Aorta (tissue), 5 donors: ENCODE measurements at regions of chr19 and their contacts with region 1.

Region 1: GRCh38 chr19:36850559-36851442 is at the start of gene ZNF345:
- DNase-seq: peak; percentile 94
- ATAC-seq: peak; percentile 98
- H3K4me3 ChIP-seq: peak within 1 kb of the TSS; percentile 79 to 84
- H3K27ac ChIP-seq: peak within 1 kb of the TSS; percentile 8 to 73
- H3K4me1 ChIP-seq: no peaks in the 10 kb centered on the region
- H3K27me3 ChIP-seq: no peaks in the 10 kb centered on the region
- total RNA-seq, gene ZNF345: 6.8 to 10.7 TPM

Region 2: DNA sequence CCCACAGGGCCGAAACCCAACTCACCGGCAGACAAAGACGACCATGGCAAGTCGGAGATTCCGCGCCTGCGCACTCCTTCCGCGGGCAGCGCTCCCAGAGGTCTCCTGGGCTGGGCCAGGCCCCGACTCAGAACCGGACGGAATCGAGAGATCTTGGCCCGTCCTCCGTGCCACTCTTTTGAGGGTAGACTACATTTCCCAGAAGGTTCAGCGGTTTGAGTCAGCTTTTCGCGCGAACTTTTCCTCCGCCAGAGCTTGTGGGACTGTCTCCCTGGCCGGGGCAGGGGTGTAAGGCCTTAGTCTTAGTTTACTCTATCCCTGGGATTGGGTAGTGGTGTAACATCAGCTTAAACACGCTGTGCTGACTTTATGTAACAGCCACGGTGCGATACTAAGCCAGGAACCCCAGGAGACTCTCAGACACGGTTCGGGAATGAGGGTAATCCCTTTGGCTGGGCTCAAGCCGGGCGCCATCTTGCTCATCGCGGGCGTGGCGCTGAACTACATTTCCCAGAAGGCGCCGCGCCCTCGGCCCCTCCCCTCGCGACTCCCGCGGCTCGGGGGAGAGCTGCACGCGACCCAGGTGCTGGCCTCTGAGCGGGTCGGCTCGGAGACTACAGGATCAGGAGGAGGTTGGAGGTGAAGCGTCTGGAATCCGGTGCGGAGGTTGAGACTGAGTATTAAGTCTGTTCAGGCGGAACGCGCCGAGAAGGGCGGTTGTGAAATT is 322.4 kb before region 1 on chr19 and contains the start of gene ZNF260:
- intact Hi-C with region 1: loop called in 1 of 2 experiments (anchors 5 kb)
- DNase-seq: peak; percentile 98 to 99
- ATAC-seq: peak; percentile 100
- H3K4me3 ChIP-seq: peak within 1 kb of the TSS; percentile 55 to 89
- H3K27ac ChIP-seq: peak within 1 kb of the TSS; percentile 46 to 73
- H3K4me1 ChIP-seq: peaks cover 0 to 5% of the 10 kb centered on the region in 2 donors
- H3K27me3 ChIP-seq: no peaks in the 10 kb centered on the region
- total RNA-seq, gene ZNF260: 7.2 to 9.1 TPM

Region 3: DNA sequence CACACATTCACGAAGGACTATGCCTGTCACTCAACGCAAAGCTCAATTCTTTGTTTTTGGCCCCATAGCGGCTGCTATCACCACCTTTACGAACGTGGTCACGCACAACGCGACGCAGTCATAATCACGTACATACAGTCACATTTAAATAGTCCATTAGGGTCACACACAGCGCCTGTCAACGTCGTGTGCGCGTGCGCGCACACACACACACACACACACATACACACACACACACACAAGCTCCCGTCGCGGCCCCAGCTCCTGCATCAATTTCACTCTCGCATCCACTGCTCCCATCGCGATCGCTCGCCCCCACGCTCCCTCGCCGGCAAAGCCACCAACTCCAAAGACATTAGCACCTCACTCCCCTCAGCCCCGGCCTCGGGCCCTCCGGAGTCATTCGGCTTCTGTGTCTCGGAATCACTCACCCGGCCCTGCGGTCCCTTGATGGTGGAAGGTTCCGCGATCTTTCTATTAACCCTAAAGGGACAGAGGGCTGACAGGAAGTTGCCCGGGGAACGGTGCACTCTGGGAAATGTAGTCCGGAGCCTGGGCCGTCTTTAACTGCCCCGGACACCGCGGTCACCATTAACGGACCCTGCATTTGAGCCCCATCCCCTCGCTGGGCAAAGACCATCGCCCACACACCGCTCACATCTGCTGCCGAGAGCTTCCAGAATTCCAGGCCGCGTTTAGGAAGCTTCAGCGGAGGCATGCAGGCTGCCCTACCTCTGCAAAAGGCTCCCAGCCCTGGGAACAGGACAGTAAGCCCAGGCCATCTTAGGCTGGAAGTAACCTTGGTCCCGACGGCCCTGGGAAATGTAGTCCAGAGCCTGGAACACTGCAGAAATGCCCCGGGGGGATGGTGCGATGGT is 12.7 kb before region 1 on chr19 and contains the start of gene ZNF790:
- intact Hi-C with region 1: loop called in 1 of 2 experiments (anchors 1 kb)
- DNase-seq: peak; percentile 94 to 96
- ATAC-seq: peak; percentile 99
- H3K4me3 ChIP-seq: peak within 1 kb of the TSS; percentile 11 to 52
- H3K27ac ChIP-seq: peak within 1 kb of the TSS in 1 of 2 donors; percentile 76
- H3K4me1 ChIP-seq: no peaks in the 10 kb centered on the region
- H3K27me3 ChIP-seq: no peaks in the 10 kb centered on the region
- total RNA-seq, gene ZNF790: 7.6 to 11.8 TPM

Region 4: DNA sequence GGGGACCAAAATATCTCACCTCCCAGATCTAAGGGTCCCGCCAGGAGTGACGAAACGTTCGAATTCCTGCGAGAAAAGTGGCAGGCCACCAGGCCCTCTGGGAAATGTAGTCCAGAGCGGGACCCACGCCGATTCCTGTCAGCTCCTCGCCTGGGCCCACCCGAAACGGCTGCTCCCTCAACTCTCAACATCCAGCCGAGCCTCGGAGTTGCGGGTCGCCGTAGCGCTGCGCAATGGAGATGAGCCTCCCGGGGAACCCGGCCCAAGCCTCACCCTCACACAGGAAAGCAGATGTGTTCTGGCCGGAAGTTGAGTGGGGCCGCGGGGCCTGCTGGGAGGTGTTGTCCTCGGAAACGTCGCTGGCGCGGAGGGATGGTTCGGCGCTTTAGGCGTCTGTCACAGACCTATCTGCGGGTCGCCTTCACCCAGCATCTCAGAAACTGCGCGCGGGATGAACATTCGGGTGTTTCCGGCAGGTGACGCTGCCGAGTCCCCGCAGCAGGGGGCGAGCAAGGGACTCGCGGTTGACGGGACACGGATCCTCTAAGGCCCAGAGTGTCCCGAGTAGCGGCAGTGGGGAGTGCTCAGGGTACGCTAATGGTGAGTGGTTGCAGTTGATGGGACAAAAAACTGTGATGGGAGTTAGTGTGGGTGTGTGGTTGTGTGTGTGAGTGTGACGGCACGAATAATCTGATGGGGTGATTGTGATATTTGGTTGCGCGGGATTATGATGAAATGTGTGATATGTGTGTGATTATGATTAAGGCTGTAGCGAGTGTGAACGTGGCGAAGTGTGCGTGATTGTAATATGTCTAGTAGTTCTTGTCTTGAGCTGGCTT is 65.4 kb after region 1 on chr19 and contains the starts of genes ZNF568 and ZNF829:
- intact Hi-C with region 1: loop called in 1 of 2 experiments (anchors 5 kb)
- DNase-seq: peak; percentile 94 to 97
- ATAC-seq: peak; percentile 96
- H3K4me3 ChIP-seq: peak within 1 kb of the TSS; percentile 77 to 81
- H3K27ac ChIP-seq: peak within 1 kb of the TSS; percentile 45 to 97
- H3K4me1 ChIP-seq: no peaks in the 10 kb centered on the region
- H3K27me3 ChIP-seq: no peaks in the 10 kb centered on the region
- total RNA-seq, gene ZNF568: 14.0 to 15.8 TPM
- total RNA-seq, gene ZNF829: 3.1 to 3.5 TPM